Breast epithelium (tissue), 4 donors: ENCODE measurements at regions of chr18 and their contacts with region 1.

Region 1: DNA sequence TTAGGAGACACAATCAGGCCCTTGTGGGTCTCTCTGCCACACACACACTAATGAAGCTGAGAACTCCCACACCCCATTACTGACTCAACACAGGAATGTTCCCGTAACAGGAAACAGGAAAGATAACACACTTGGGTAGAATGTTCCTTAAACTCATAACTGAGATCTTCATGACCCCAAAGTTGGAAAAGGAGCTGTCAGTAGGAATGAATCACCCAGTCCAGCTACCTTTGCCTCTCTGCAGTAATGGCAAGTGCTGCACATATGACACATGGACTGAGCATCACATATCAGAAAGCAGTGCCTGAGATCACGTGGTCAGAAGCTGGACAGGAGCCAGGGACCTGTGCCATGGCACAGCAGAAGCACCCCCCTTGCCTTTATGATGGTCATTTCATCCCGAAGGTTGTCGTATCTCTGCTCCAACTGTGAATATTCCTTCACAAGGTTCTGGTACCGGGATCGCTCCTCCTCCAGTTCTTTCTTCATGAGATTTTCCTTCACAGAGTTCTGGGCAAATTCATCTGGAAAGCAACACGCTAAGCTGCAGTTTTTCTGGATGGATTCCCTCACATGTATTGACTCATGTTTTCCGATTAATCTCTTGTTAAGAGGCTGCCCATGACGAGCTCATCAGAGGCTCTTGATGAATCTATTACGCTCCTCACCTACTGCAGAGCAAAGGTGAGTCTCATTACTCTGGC is 65.4 kb upstream of the ACAA2 start:
- DNase-seq: no peak
- H3K4me3 ChIP-seq: no peak overlapping the region
- H3K27ac ChIP-seq: no peak overlapping the region
- H3K4me1 ChIP-seq: no peaks in the 10 kb centered on the region
- H3K27me3 ChIP-seq: no peaks in the 10 kb centered on the region
- CTCF ChIP-seq: no peak
- POLR2A ChIP-seq: no peak

Region 2: GRCh38 chr18:48928787-48929186 is 949.9 kb before region 1 on chr18:
- intact Hi-C with region 1: loop called (anchors 5 kb)
- DNase-seq: no peak
- H3K4me3 ChIP-seq: peak overlapping the region in 1 of 3 donors; percentile 39
- H3K27ac ChIP-seq: peak overlapping the region; percentile 77 to 83
- H3K4me1 ChIP-seq: peaks cover 16 to 41% of the 10 kb centered on the region in 2 donors
- H3K27me3 ChIP-seq: no peaks in the 10 kb centered on the region
- CTCF ChIP-seq: no peak
- POLR2A ChIP-seq: no peak

Region 3: GRCh38 chr18:49802623-49803022 is 76.1 kb before region 1 on chr18:
- intact Hi-C with region 1: no loop called
- DNase-seq: no peak
- H3K4me3 ChIP-seq: no peak overlapping the region
- H3K27ac ChIP-seq: no peak overlapping the region
- H3K4me1 ChIP-seq: no peaks in the 10 kb centered on the region
- H3K27me3 ChIP-seq: no peaks in the 10 kb centered on the region
- CTCF ChIP-seq: no peak
- POLR2A ChIP-seq: no peak

Region 4: DNA sequence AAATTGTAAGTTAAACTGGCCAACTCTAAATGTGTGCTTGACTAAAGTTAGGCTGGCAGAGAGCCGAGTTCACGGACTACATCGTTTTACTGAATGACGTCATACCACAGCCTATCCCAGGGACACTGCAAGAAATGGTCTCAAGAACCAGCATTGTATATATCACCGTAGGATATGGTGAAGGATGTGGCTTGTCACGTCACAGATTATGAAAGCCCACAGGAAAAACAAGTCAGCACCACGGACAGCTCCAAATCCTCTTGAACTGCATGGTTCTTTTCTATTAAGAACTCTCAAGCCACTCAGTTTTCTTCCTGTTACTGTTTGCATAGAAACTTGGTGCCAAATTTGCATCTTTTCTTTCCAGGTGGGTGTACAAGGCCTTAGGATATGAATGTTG is 19.7 kb after region 1 on chr18:
- intact Hi-C with region 1: no loop called
- DNase-seq: no peak
- H3K4me3 ChIP-seq: no peak overlapping the region
- H3K27ac ChIP-seq: no peak overlapping the region
- H3K4me1 ChIP-seq: no peaks in the 10 kb centered on the region
- H3K27me3 ChIP-seq: no peaks in the 10 kb centered on the region
- CTCF ChIP-seq: no peak
- POLR2A ChIP-seq: no peak

Region 5: DNA sequence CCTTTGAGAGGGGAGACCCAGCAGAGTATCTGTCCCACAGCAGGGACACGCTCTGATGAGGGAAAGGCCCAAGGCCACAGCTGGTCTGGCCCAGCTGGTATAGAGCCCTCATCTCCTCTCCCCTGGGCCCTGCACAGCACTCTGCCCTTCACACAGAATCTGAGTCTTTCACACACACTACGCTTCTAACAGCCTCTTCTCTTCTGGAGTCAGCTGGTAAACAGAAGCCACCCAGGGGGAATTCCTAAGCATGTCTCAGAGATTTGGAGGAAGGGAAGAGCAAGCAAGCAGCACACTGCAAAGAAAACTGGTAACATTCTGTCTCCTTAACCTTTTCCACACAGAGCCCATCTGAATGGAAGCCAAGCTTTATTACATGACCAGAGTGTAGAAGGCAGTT is 55.7 kb after region 1 on chr18:
- intact Hi-C with region 1: loop called (anchors 2 kb)
- DNase-seq: no peak
- H3K4me3 ChIP-seq: no peak overlapping the region
- H3K27ac ChIP-seq: no peak overlapping the region
- H3K4me1 ChIP-seq: no peaks in the 10 kb centered on the region
- H3K27me3 ChIP-seq: no peaks in the 10 kb centered on the region
- CTCF ChIP-seq: no peak
- POLR2A ChIP-seq: no peak